A673 (cell line): ENCODE measurements at regions of chr21 and their contacts with region 1.

Region 1: DNA sequence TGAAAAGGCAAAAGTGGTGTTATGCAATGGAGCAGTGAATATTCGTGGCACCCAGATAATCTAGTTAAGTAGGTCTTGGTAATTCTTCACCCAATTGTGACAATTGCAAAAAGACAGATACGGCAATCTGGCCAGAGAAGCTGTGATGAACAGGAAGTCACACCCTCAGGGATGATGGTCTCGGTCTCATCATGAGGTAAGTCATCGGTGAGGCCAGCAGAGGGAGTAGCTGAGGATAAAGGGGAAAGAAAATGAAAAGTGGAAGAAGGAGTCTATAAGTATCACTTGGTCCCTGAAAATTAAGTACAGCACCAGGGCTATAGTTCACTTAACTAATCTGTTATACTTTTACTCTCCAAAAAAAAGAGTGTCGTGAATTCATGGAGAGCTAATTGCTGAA is 258.8 kb upstream of the NCAM2 start:
- DNase-seq: peak; percentile 41
- H3K4me3 ChIP-seq: no peak overlapping the region
- H3K27ac ChIP-seq: no peak overlapping the region
- H3K4me1 ChIP-seq: no peaks in the 10 kb centered on the region
- H3K27me3 ChIP-seq: no peaks in the 10 kb centered on the region
- CTCF ChIP-seq: peak; percentile 51

Region 2: DNA sequence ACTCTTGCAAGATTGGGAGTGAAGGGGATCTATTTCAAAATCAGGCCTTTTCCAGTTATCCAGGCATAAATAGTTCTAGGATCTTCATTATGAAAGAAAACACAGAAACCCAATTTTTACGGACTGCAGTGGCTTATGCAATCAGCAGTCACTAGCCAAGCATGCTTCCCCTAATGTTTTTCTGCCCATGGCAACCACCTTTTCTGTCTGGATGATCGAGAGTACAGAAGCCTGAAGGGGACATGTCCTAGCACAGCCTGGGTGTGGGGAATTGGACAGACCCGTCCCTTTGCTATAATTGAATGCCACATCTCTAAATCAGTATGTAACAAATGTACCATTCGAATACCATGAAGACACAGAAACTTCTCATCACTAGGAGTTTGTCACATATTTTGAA is 229.0 kb after region 1 on chr21:
- CTCF ChIA-PET with region 1: no interaction called
- POLR2A ChIA-PET with region 1: no interaction called
- intact Hi-C with region 1: loop called (anchors 10 kb)
- DNase-seq: peak; percentile 23
- H3K4me3 ChIP-seq: no peak overlapping the region
- H3K27ac ChIP-seq: no peak overlapping the region
- H3K4me1 ChIP-seq: peaks cover 6% of the 10 kb centered on the region
- H3K27me3 ChIP-seq: no peaks in the 10 kb centered on the region
- CTCF ChIP-seq: no peak